AG04449 (cell line): ENCODE measurements at regions of chr4 and their contacts with region 1.

Region 1: GRCh38 chr4:38675146-38676121 is 11.4 kb downstream of the KLF3 start:
- DNase-seq: peak; percentile 34
- H3K4me3 ChIP-seq: no peak overlapping the region
- CTCF ChIP-seq: peak; percentile 75

Region 2: DNA sequence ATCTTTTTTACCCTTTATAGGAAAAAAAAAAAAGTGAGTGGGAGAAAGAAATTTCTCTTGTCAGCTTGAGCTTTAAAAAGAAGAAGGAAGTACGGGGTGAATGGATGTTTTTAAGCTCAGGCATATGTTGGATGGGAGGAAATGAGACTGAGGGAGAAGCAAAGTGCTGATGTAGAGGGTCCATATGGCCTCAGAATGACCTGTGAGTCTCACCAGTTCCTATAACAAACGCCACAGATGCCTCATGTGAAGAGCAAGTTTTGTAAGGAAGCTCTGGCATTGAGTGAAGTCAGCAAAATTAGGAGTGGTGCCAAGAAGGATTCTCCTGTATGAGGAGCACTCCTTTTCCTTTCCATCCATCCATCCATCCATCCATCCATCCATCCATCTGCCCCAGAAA is 500.6 kb before region 1 on chr4:
- CTCF ChIA-PET with region 1: interaction called, 65 read pairs
- POLR2A ChIA-PET with region 1: no interaction called
- DNase-seq: no peak
- H3K4me3 ChIP-seq: no peak overlapping the region
- CTCF ChIP-seq: no peak

Region 3: DNA sequence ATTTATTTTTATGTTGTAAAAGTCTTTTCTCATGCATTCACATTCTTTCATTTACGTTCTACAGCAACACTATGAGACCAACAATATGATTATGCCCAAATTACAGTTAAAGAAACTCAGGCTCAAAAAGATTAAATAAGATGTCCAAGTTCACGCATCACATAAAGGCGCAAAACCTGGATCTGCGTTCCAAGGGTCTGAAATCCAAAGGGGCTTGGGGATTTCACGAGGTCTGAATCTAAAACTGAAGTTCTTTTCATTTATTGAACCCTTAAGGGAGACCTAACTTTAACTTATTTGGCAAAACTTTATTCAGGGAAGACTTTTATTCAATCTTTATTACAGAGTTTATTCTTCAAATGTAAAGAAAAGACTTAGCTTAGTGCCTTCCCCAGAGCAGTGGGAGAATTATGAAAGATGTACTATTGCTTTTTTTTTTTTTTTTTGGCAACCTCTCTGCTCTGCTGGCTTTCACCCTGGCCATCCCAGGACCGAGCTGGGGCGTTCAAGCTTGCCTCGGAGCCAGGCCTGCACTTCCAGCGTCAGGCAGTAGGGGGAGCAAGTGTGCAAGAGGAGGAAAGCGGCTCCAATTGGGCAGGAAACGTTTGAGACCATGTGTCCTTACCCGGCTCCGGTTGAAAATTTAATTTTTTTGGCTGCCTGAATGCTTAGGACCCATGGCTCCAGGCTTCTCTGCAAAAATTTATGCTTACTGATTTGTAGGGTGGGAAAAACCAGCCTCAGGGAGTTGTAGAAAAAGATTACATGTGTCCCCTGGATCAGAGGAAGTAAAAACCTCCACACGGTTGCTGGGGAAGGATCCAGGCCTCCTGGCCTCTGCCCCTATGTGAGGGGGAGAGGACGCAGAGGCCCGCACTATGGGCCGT is 355.7 kb before region 1 on chr4:
- CTCF ChIA-PET with region 1: interaction called, 64 read pairs
- POLR2A ChIA-PET with region 1: no interaction called
- DNase-seq: peak; percentile 40
- H3K4me3 ChIP-seq: no peak overlapping the region
- CTCF ChIP-seq: peak; percentile 98

Region 4: GRCh38 chr4:38687571-38688011 is 12.2 kb after region 1 on chr4:
- CTCF ChIA-PET with region 1: interaction called, 27 read pairs
- POLR2A ChIA-PET with region 1: interaction called, 6 read pairs
- DNase-seq: no peak
- H3K4me3 ChIP-seq: no peak overlapping the region
- CTCF ChIP-seq: no peak

Region 5: DNA sequence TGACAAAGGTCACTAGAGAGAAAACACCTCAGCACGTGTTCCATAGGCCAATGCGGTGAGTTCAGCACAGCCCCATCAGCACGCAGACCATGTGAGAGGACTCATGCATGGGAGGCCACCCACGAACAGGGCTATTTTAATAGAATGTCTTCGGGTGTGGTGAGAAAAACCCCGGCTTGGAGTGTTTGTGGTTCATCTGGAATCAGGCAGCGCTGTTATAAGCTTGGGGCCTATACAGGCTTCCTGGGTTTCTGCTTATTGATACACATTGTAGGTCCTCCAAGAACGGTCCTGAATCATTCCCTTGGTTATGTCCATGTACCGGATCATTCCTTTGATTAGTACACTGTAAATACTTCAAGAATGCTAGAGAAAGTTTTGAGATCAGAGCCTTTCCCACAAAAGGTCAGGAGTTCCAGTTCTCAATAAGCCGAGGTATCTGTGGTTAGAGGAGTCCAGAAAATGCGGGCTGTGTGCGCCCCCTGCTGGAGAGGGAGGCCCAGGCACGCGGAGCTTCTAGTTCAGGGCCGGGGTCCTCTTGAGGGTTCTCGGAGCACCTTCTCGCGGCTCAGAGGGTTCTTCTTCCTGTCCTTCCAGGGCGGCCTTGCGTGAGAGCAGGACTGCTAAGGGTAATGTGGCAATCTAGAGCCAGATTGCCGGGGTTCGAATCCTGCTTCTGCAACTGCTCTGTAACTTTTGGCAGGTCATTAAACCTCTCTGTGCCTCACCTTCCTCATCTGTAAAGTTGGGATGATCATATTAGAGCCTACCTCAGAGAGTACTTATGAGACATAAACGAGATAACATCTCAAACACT is 55.6 kb after region 1 on chr4:
- CTCF ChIA-PET with region 1: interaction called, 22 read pairs
- POLR2A ChIA-PET with region 1: interaction called, 4 read pairs
- DNase-seq: peak; percentile 91
- H3K4me3 ChIP-seq: no peak overlapping the region
- CTCF ChIP-seq: peak; percentile 97